ENCODE measurements at regions of chr1 and their contacts with region 1.

Region 1: DNA sequence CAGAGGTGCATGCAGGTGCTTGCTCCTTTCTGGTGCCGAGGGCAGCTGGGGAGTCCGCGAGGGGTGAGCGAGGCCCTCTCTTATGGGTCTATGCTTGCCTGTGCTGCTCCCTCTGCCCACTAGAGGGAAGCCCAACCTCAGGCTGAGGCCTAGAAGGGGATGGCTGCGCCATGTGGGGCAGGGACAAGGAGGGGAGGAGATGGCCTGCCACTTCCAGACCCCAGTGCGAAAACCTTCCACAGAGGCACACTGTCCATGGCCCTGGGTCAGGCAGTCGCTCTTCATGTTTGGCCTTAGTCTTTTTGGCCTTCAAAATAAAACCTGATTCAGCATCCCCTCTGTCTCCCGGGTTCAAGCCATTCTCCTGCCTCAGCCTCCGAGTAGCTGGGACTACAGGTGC is 14.0 kb downstream of the RHBG start:
- DNase-seq: peak; percentile 91
- H3K4me3 ChIP-seq: no peak overlapping the region
- H3K27ac ChIP-seq: no peak overlapping the region
- H3K4me1 ChIP-seq: peaks cover 5 to 6% of the 10 kb centered on the region in 2 experiments; a peak in 2 of 4 replicates
- H3K27me3 ChIP-seq: no peaks in the 10 kb centered on the region
- CTCF ChIP-seq: peak; percentile 81
- EP300 ChIP-seq: no peak
- RAD21 ChIP-seq: peak; percentile 86

Region 2: GRCh38 chr1:155893389-155894142 is 489.5 kb before region 1 on chr1:
- CTCF ChIA-PET with region 1: no interaction called
- POLR2A ChIA-PET with region 1: no interaction called
- DNase-seq: no peak
- H3K4me3 ChIP-seq: peak overlapping the region in 1 of 2 experiments; percentile 23; a peak in 2 of 4 replicates
- H3K27ac ChIP-seq: peak overlapping the region; percentile 79 to 94
- H3K4me1 ChIP-seq: peaks cover 5 to 43% of the 10 kb centered on the region in 2 experiments
- H3K27me3 ChIP-seq: no peaks in the 10 kb centered on the region
- CTCF ChIP-seq: no peak
- EP300 ChIP-seq: no peak
- RAD21 ChIP-seq: no peak

Region 3: GRCh38 chr1:156346636-156347035 is 36.4 kb before region 1 on chr1:
- CTCF ChIA-PET with region 1: interaction called, 15 read pairs
- POLR2A ChIA-PET with region 1: no interaction called
- DNase-seq: no peak
- H3K4me3 ChIP-seq: no peak overlapping the region
- H3K27ac ChIP-seq: peak overlapping the region; percentile 42 to 87; a peak in 3 of 4 replicates
- H3K4me1 ChIP-seq: peaks cover 0 to 23% of the 10 kb centered on the region in 2 experiments; a peak in 2 of 4 replicates
- H3K27me3 ChIP-seq: no peaks in the 10 kb centered on the region
- CTCF ChIP-seq: no peak
- EP300 ChIP-seq: peak in 1 of 2 experiments; percentile 31; a peak in 1 of 4 replicates
- RAD21 ChIP-seq: no peak

Region 4: GRCh38 chr1:156394835-156395461 is 11.9 kb after region 1 on chr1:
- CTCF ChIA-PET with region 1: interaction called, 113 read pairs
- POLR2A ChIA-PET with region 1: no interaction called
- DNase-seq: no peak
- H3K4me3 ChIP-seq: no peak overlapping the region
- H3K27ac ChIP-seq: no peak overlapping the region
- H3K4me1 ChIP-seq: peaks cover 0 to 6% of the 10 kb centered on the region in 2 experiments; a peak in 1 of 4 replicates
- H3K27me3 ChIP-seq: no peaks in the 10 kb centered on the region; the same call in 1 of the 2 replicates
- CTCF ChIP-seq: no peak
- EP300 ChIP-seq: no peak
- RAD21 ChIP-seq: no peak

Region 5: DNA sequence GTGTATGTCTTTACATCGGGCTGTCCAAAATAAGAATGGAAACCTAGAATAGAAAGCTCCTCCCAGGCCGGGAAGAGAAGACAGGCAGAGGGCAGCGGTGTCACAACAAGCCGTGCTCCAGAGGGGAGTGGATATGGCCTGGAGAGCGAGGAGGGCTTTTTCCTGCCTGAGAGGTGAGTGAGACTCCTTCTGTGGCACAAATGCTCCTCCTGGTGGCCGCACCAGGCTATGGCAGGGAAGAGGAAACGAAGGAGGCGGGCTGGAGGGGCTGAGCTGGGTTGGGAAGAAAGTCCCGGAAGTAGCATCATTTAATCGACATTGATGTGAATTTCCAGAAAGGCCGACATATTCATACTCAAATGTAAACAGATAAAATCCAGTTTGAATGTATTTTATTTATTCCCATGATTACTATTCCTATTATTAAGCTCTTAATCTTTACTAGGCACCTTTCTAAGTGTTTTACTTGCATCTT is 62.8 kb after region 1 on chr1:
- CTCF ChIA-PET with region 1: interaction called, 391 read pairs
- POLR2A ChIA-PET with region 1: no interaction called
- DNase-seq: peak; percentile 87
- H3K4me3 ChIP-seq: peak overlapping the region in 1 of 2 experiments; percentile 36; a peak in 1 of 4 replicates
- H3K27ac ChIP-seq: no peak overlapping the region
- H3K4me1 ChIP-seq: no peaks in the 10 kb centered on the region; a peak in 1 of 4 replicates
- H3K27me3 ChIP-seq: 0 out of 2 replicates have a peak, but pooled peaks cover 10% of the 10 kb centered on the region
- CTCF ChIP-seq: peak; percentile 96
- EP300 ChIP-seq: no peak
- RAD21 ChIP-seq: peak; percentile 95

Region 6: DNA sequence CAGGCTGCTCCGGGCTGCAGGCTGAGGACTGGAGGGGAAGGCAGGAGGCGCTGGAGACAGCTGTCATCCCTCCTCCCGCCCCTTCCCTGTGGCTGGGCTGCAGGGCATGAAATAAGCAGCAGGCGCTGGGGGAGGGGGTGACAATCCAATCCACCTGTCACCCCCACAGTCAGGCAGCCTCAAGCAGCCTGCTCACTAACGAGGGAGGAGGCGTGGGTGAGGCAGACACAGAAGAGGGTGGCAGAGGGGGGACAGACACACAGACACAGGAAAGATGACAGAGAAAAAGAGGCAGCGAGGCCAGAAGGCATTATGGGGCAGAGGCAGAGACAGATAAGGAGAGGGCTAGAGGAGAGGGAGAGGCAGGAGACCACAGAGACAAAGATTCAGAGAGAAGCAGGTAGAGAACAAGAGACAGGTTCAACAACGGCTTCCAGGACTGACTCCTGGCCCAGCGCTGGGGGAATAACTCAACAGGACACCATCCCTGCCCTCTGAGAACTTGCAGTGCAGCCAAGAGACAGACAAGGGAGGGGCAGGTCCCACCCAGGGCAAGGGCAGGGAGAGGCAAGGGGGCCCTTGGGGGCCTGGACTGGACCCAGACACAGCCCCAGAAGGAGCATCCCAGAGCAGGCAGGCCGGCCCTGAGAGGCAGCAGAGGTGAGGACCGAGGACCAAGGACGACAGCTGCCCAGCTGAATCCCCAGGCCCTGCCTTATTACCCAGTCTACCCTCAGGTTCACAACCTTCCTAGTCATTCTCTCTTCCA is 106.3 kb after region 1 on chr1:
- CTCF ChIA-PET with region 1: interaction called, 18 read pairs
- POLR2A ChIA-PET with region 1: no interaction called
- DNase-seq: peak; percentile 54
- H3K4me3 ChIP-seq: 0 out of 4 replicates have a peak overlapping the region, but pooled peaks of 1 of the 2 experiments have one; percentile 1
- H3K27ac ChIP-seq: peak overlapping the region; percentile 14 to 35; a peak in 2 of 4 replicates
- H3K4me1 ChIP-seq: peaks cover 30 to 65% of the 10 kb centered on the region in 2 experiments; a peak in 3 of 4 replicates
- H3K27me3 ChIP-seq: no peaks in the 10 kb centered on the region
- CTCF ChIP-seq: no peak
- EP300 ChIP-seq: no peak
- RAD21 ChIP-seq: no peak

Region 7: DNA sequence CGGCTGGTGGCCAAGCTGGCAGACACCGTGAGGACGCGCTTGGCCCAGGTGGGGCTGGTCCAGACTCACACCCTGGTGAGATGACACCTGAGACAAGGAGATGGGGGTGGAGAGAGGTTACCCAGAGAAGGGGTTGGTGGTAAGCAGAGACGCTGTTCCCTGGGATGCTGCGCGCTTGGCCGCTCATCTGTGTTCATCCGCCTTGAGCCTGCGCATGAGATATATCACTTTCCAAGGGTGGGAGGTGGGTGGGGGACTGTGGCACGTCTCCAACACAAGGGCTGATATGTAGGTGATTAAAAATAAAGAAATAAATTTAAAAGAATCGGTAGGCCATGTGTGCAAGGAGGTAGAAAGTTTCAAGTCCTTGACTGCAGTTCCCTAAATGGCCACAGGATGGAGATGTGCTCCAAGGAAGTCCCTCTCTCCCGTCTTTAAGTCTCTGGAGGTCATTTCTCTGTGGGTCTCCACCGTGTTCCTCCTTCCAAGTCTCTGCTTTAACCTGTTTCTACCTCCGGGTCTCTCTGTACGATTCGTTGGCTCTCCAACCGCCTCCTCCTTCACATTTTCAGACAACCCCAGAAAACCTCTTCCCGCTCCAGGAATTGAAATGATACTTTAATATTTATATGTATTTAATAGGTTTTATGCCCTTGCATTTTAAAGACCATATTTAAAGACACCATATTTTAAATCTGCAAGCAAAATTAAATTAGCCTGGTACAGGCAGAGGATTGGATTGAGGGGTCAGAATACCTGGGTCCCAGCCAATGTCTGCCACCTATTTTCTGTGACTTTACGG is 201.0 kb after region 1 on chr1:
- CTCF ChIA-PET with region 1: interaction called, 11 read pairs
- POLR2A ChIA-PET with region 1: no interaction called
- DNase-seq: peak; percentile 78
- H3K4me3 ChIP-seq: no peak overlapping the region
- H3K27ac ChIP-seq: no peak overlapping the region
- H3K4me1 ChIP-seq: no peaks in the 10 kb centered on the region
- H3K27me3 ChIP-seq: no peaks in the 10 kb centered on the region
- CTCF ChIP-seq: peak; percentile 88
- EP300 ChIP-seq: no peak
- RAD21 ChIP-seq: peak; percentile 89